ENCODE measurements at regions of chr19 and their contacts with region 1.

Region 1: DNA sequence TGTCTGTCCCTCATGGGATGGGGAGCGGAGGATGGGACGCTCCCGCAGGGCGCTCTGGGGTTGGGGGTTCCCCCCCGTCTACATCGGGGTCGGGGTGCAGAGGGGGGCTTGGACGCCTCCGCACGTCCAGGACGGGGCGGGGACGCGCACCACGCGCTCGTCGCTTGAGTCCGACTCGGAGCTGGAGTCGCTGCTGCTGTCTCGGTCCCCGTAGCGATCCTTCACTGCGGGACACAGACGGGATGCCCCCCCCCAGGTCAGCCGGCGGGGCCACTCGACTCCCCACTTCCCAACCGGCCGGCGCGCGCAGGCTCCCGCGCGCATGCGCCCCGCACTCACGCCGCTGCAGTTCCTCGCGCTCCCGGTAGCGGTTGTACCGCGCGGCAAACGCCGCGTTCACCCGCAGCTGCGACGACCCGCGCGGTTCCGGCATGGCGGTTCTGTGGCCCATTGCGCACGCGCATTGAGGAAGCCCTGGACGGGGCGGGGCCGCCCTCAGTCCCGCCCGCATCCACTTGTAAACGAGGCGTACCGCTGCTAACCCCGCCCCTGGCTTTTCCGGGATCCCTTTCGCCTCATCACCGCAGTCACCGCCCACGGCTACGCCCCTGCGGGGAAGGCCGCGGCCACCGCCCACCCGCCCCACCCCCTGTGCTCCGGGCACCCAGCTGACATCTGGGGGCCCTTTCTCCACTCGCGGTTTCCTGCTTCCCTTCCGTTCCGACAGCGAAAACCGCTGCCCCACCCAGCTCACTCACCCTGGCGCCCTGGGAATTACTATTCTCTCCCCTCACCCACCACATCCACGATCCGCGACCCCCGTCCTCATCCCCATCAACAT is at the start of gene KRI1:
- DNase-seq: peak; percentile 99
- H3K4me3 Mint-ChIP-seq: peak within 1 kb of the TSS; percentile 84
- H3K27ac Mint-ChIP-seq: peak within 1 kb of the TSS; percentile 99
- H3K4me1 Mint-ChIP-seq: peaks cover 47% of the 10 kb centered on the region
- H3K27me3 Mint-ChIP-seq: no peaks in the 10 kb centered on the region

Region 2: DNA sequence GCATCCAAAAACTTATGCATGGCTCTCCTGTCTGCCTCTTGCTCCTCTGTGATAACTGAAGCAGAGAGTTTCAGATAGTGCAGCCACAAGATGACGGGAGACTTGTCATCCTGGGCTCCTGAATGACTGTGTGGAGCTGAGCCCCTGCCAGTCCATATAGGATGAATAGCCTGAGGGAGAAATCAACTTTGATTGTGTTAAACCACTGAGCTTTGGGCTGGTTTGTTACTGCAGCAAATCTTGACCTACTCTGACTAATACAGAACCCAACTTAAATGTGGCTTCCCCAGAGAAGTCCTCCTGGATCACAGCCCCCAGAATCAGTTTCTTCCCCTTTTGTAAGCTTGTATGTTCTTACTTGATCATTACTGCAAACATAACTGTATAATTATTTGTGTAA is 33.3 kb before region 1 on chr19:
- CTCF ChIA-PET with region 1: no interaction called
- DNase-seq: no peak
- H3K4me3 Mint-ChIP-seq: no peak overlapping the region
- H3K27ac Mint-ChIP-seq: no peak overlapping the region
- H3K4me1 Mint-ChIP-seq: no peaks in the 10 kb centered on the region
- H3K27me3 Mint-ChIP-seq: peaks cover 65% of the 10 kb centered on the region

Region 3: DNA sequence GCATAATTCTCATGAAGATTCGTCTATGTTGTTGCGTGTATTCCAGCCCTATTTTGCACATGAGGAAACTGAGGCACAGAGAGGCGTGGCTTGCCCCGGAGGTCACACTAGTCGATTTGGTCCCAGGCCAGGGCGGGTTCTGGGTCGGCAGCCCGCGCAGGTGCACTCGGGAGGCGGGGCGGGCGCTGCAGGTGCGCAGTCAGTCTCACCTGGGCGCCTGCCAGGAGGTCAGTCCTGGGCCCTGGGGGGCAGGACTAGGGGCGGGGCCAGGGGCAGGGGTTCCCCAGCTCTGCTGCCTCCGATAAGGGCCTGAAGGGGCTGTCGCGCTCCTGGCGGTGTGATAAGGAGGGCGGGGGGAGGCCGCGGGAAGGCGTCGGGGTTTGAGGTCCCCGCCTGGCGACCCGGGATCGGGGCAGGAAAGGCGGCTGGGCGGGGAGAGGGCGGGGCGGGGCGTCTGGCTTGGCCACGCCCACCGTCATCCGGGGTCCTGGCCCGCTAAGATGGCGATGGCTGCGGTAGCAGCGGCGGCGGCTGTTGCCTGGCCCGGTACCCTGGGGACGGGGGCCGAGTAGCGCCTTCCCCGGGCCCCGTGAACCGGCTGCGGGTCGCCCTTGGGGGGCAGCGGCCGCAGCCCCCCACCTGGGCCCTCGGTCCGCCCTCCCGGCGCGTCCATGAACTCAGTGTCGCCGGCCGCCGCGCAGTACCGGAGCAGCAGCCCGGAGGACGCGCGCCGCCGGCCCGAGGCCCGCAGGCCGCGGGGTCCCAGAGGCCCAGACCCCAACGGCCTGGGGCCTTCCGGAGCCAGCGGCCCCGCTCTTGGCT is 22.2 kb before region 1 on chr19 and contains the start of gene ATG4D:
- CTCF ChIA-PET with region 1: interaction called, 19 read pairs
- DNase-seq: peak; percentile 87
- H3K4me3 Mint-ChIP-seq: peak within 1 kb of the TSS; percentile 89
- H3K27ac Mint-ChIP-seq: peak within 1 kb of the TSS; percentile 88
- H3K4me1 Mint-ChIP-seq: peaks cover 25% of the 10 kb centered on the region
- H3K27me3 Mint-ChIP-seq: peaks cover 43% of the 10 kb centered on the region

Region 4: GRCh38 chr19:10551698-10552301 is 14.0 kb before region 1 on chr19:
- CTCF ChIA-PET with region 1: interaction called, 12 read pairs
- DNase-seq: peak; percentile 69
- H3K4me3 Mint-ChIP-seq: no peak overlapping the region
- H3K27ac Mint-ChIP-seq: peak overlapping the region; percentile 97
- H3K4me1 Mint-ChIP-seq: peaks cover 60% of the 10 kb centered on the region
- H3K27me3 Mint-ChIP-seq: no peaks in the 10 kb centered on the region

Measured in activated naive CD4-positive, alpha-beta T cell treated with anti-CD3 and anti-CD28 coated beads, Interleukin-2, amount 10 ng/mL, durations not matched to agents 7 days and 5 days (primary cell).